Naive thymus-derived CD4-positive, alpha-beta T cell (primary cell): ENCODE measurements at regions of chr2 and their contacts with region 1.

Region 1: DNA sequence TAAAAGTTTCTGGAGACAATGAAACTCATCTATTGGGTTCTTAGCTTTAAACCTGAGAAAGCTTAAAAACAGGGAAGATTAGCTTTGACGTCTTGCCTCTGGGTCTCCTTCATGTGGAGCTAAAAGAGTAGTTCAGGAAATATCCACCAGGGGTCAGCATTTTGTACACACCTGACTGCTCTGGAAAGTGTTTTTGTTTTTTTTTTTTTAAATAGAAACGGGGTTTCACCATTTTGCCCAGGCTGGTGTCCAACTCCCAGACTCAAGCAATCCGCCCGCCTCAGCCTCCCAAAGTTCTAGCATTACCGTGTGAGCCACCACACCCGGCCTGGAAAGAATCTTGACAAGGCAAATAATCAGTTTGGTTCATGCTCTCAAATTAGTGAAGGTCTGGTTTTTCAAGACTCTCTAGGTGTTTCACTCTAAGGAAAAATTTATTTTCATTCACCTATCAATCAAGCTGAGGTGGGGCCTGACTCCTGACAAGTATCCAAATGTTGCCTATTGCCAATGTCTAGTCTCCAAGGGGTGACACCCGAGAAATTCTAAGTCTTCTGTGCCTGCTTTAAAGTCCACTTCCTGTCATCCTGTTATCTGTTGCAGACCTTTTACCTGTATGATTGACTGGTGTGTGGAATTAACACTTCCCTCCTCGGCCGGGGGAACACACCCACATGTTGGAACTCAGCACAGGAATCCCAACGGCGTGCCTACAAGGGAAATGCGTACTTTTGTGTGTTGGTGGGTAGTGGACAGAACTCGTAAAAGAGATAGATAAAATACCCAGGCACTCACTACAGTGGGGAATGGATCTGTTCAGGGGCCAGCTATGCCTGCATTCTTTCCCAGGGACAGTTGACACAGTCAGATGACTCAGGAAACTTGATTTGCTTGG is 11.3 kb downstream of the IL1RN start:
- DNase-seq: peak in 7 of 9 donors; percentile 67 to 82 (median 79)
- ATAC-seq: peak; percentile 89
- H3K4me3 ChIP-seq: peak overlapping the region; percentile 10
- H3K4me3 Mint-ChIP-seq: peak overlapping the region; percentile 37 to 81 (median 64)
- H3K27ac ChIP-seq: peak overlapping the region; percentile 54
- H3K27ac Mint-ChIP-seq: peak overlapping the region in 8 of 9 donors; percentile 36 to 87 (median 68)
- H3K4me1 ChIP-seq: peaks cover 0 to 8% of the 10 kb centered on the region in 2 donors
- H3K4me1 Mint-ChIP-seq: peaks cover 17 to 32% (median 23%) of the 10 kb centered on the region in 7 donors
- H3K27me3 ChIP-seq: no peaks in the 10 kb centered on the region
- H3K27me3 Mint-ChIP-seq: no peaks in the 10 kb centered on the region

Region 2: DNA sequence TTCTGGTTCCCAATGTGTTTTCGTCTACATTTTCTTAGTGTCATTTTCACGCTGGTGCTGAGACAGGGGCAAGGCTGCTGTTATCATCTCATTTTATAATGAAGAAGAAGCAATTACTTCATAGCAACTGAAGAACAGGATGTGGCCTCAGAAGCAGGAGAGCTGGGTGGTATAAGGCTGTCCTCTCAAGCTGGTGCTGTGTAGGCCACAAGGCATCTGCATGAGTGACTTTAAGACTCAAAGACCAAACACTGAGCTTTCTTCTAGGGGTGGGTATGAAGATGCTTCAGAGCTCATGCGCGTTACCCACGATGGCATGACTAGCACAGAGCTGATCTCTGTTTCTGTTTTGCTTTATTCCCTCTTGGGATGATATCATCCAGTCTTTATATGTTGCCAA is 153.6 kb before region 1 on chr2:
- CTCF ChIA-PET with region 1: interaction called, 26 read pairs
- POLR2A ChIA-PET with region 1: no interaction called
- intact Hi-C with region 1: loop called in 1 of 2 experiments (anchors 1 kb)
- DNase-seq: peak in 7 of 9 donors; percentile 49 to 74 (median 59)
- ATAC-seq: peak; percentile 95
- H3K4me3 ChIP-seq: no peak overlapping the region
- H3K4me3 Mint-ChIP-seq: peak overlapping the region in 8 of 10 donors; percentile 0 to 50 (median 12)
- H3K27ac ChIP-seq: peak overlapping the region; percentile 43
- H3K27ac Mint-ChIP-seq: peak overlapping the region; percentile 46 to 87 (median 73)
- H3K4me1 ChIP-seq: peaks cover 0 to 32% of the 10 kb centered on the region in 2 donors
- H3K4me1 Mint-ChIP-seq: peaks cover 17 to 36% (median 25%) of the 10 kb centered on the region in 7 donors
- H3K27me3 ChIP-seq: no peaks in the 10 kb centered on the region
- H3K27me3 Mint-ChIP-seq: peaks cover 0 to 4% (median 0%) of the 10 kb centered on the region in 5 donors

Region 3: GRCh38 chr2:113148606-113149560 is 10.2 kb after region 1 on chr2:
- CTCF ChIA-PET with region 1: interaction called, 17 read pairs
- POLR2A ChIA-PET with region 1: no interaction called
- intact Hi-C with region 1: no loop called
- DNase-seq: no peak
- ATAC-seq: no peak
- H3K4me3 ChIP-seq: no peak overlapping the region
- H3K4me3 Mint-ChIP-seq: no peak overlapping the region
- H3K27ac ChIP-seq: no peak overlapping the region
- H3K27ac Mint-ChIP-seq: peak overlapping the region in 1 of 9 donors; percentile 14
- H3K4me1 ChIP-seq: no peaks in the 10 kb centered on the region
- H3K4me1 Mint-ChIP-seq: peaks cover 0 to 12% (median 4%) of the 10 kb centered on the region in 7 donors
- H3K27me3 ChIP-seq: no peaks in the 10 kb centered on the region
- H3K27me3 Mint-ChIP-seq: peaks cover 0 to 31% (median 0%) of the 10 kb centered on the region in 5 donors

Region 4: DNA sequence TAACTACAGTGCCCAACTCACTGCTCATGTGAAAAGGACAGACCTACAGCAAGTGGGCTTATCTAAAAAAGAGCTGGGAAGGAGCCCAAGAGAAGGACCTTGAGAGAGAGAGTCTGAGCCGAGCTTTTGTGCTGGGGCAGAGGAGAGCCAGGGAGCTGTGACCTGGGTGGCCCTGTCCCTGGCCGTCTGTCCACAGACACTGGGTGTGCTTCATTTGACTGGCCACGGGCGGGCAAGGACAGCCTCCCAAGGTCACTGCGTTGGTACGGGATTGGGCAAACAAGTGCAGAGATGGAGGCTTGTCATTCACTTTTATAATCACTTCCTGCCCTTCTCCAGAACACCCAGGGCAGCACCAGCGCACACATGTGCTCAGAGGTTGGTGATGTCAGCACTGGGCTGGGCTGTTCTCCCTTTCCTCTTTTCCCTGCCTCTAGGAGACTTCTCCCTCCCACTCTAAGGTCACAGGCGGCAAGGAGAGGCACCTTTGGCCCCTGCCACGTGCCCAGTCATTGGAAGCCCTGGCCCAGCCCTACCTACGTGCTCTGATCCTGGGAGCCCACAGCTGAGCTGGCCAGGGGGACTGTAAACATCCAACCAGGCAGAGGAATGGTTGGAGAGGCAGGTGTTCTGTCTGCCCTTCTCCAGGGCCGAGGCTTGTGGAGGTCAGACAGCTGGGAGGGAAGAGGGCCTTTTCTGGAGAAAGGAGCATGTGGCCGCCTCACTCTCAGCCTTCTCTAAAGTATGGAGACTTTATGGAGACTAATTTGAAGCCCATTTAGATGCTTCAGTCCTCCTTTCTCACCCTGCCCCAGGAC is 28.6 kb after region 1 on chr2:
- CTCF ChIA-PET with region 1: interaction called, 80 read pairs
- POLR2A ChIA-PET with region 1: interaction called, 20 read pairs
- intact Hi-C with region 1: no loop called
- DNase-seq: peak in 6 of 9 donors; percentile 38 to 45 (median 41)
- ATAC-seq: peak; percentile 72
- H3K4me3 ChIP-seq: peak overlapping the region; percentile 34
- H3K4me3 Mint-ChIP-seq: peak overlapping the region; percentile 57 to 87 (median 78)
- H3K27ac ChIP-seq: peak overlapping the region; percentile 87
- H3K27ac Mint-ChIP-seq: peak overlapping the region; percentile 88 to 100 (median 97)
- H3K4me1 ChIP-seq: peaks cover 40 to 74% of the 10 kb centered on the region in 2 donors
- H3K4me1 Mint-ChIP-seq: peaks cover 61 to 88% (median 80%) of the 10 kb centered on the region in 7 donors
- H3K27me3 ChIP-seq: no peaks in the 10 kb centered on the region
- H3K27me3 Mint-ChIP-seq: no peaks in the 10 kb centered on the region

Region 5: DNA sequence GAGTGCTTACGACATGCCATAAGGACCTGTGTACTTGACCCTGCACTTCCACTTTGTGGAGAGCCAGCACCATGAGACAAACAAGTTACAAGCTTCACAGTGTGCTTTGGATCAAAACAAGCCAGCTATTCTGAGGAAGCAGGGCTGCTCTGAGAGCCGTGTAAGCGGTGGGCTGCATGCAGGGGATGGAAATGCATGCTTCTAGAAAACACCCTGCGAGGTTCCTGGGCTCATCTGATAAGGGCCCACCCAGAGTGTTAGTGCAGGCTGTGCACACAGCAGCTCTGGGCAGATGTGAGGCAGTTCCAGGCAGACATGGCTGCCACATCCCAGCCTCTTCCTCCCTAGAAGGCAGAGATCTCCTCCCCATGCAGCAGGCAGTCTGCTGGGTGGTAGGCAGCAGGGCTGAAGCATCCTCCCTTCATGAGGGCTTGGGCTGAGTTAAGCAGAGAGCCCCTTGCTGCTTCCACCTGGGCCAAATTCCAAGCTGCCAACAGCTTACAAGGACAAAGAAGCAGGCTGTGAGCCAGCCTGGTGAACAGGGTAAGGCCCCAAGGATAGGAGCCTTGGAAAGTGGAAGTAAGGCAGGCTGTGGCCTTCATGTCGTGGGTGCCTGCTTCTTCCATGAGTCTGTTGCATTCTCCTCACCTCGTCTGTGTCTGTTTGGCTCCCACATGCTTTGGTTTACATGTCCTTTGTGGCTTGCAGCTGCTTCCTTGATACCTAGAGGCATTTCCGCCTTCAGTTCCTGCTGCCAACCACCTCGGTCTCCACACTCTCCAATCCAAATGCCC is 42.8 kb after region 1 on chr2:
- CTCF ChIA-PET with region 1: interaction called, 105 read pairs
- POLR2A ChIA-PET with region 1: interaction called, 28 read pairs
- intact Hi-C with region 1: loop called in 1 of 2 experiments (anchors 1 kb)
- DNase-seq: peak in 2 of 9 donors; percentile 24 to 34
- ATAC-seq: peak; percentile 51
- H3K4me3 ChIP-seq: peak overlapping the region; percentile 43
- H3K4me3 Mint-ChIP-seq: peak overlapping the region; percentile 47 to 97 (median 76)
- H3K27ac ChIP-seq: peak overlapping the region; percentile 58
- H3K27ac Mint-ChIP-seq: peak overlapping the region; percentile 77 to 96 (median 93)
- H3K4me1 ChIP-seq: peaks cover 83 to 95% of the 10 kb centered on the region in 2 donors
- H3K4me1 Mint-ChIP-seq: peaks cover 79 to 98% (median 93%) of the 10 kb centered on the region in 7 donors
- H3K27me3 ChIP-seq: no peaks in the 10 kb centered on the region
- H3K27me3 Mint-ChIP-seq: no peaks in the 10 kb centered on the region

Region 6: DNA sequence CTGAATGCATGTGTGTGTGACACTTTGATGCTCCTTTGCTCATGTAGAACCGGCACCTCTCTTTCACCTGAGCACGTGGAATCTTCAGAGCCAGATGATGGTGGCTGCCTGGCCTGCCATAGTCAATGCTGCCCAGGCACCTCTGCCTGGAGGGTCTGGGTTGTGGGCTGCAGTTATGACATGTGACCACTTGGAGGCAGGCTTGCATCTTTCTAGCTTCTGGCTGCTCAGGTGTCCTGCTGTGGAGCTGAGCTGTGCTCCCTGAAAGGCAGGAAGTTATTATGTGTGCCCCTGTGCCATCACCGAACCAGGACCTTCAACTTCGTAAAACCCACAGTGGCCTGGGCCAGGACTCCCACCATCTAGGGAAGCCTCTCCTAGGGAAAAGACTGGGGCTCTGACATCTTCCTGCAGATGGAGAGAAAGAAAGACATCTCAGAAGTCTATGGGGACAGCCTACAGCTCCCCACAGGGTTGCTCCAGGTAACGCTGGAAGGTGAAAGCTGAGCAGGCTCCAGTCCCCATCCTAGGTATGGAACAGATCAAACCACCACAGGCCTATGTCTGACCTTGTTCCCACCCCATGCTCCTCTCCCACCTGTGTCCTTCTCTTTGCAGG is 65.3 kb after region 1 on chr2:
- CTCF ChIA-PET with region 1: interaction called, 356 read pairs
- POLR2A ChIA-PET with region 1: interaction called, 9 read pairs
- intact Hi-C with region 1: loop called (anchors 1 kb)
- DNase-seq: peak; percentile 50 to 84 (median 76)
- ATAC-seq: peak; percentile 92
- H3K4me3 ChIP-seq: no peak overlapping the region
- H3K4me3 Mint-ChIP-seq: peak overlapping the region in 9 of 10 donors; percentile 23 to 63 (median 48)
- H3K27ac ChIP-seq: peak overlapping the region; percentile 63
- H3K27ac Mint-ChIP-seq: peak overlapping the region; percentile 65 to 94 (median 87)
- H3K4me1 ChIP-seq: peaks cover 9 to 10% of the 10 kb centered on the region in 2 donors
- H3K4me1 Mint-ChIP-seq: peaks cover 15 to 49% (median 31%) of the 10 kb centered on the region in 7 donors
- H3K27me3 ChIP-seq: no peaks in the 10 kb centered on the region
- H3K27me3 Mint-ChIP-seq: no peaks in the 10 kb centered on the region

Region 7: GRCh38 chr2:113370478-113371091 is 231.9 kb after region 1 on chr2:
- CTCF ChIA-PET with region 1: interaction called, 17 read pairs
- POLR2A ChIA-PET with region 1: interaction called, 3 read pairs
- intact Hi-C with region 1: loop called in 1 of 2 experiments (anchors 1 kb)
- DNase-seq: peak; percentile 27 to 82 (median 68)
- ATAC-seq: peak; percentile 91
- H3K4me3 ChIP-seq: no peak overlapping the region
- H3K4me3 Mint-ChIP-seq: no peak overlapping the region
- H3K27ac ChIP-seq: no peak overlapping the region
- H3K27ac Mint-ChIP-seq: peak overlapping the region in 3 of 9 donors; percentile 1 to 90 (median 40)
- H3K4me1 ChIP-seq: no peaks in the 10 kb centered on the region
- H3K4me1 Mint-ChIP-seq: peaks cover 0 to 18% (median 6%) of the 10 kb centered on the region in 7 donors
- H3K27me3 ChIP-seq: no peaks in the 10 kb centered on the region
- H3K27me3 Mint-ChIP-seq: peaks cover 0 to 16% (median 6%) of the 10 kb centered on the region in 5 donors